Psoas muscle (tissue), 8 donors: ENCODE measurements at regions of chr10 and their contacts with region 1.

Region 1: GRCh38 chr10:73131301-73131700 is 21.0 kb downstream of the NUDT13 start:
- DNase-seq: no peak
- ATAC-seq: peak in 1 of 4 donors; percentile 35
- H3K4me3 ChIP-seq: no peak overlapping the region
- H3K27ac ChIP-seq: no peak overlapping the region
- H3K4me1 ChIP-seq: no peaks in the 10 kb centered on the region
- H3K27me3 ChIP-seq: no peaks in the 10 kb centered on the region
- CTCF ChIP-seq: no peak

Region 2: GRCh38 chr10:73167783-73168464 is 36.6 kb after region 1 on chr10 and contains the starts of genes ECD and FAM149B1:
- intact Hi-C with region 1: no loop called
- DNase-seq: peak; percentile 95 to 97
- ATAC-seq: peak; percentile 98 to 99 (median 98)
- H3K4me3 ChIP-seq: peak within 1 kb of the TSS; percentile 98
- H3K27ac ChIP-seq: peak within 1 kb of the TSS; percentile 99
- H3K4me1 ChIP-seq: peaks cover 33% of the 10 kb centered on the region
- H3K27me3 ChIP-seq: no peaks in the 10 kb centered on the region
- CTCF ChIP-seq: peak; percentile 14
- total RNA-seq, gene ECD: 12.2 to 17.1 (median 15.0) TPM
- total RNA-seq, gene FAM149B1: 8.9 to 18.1 (median 11.8) TPM

Region 3: DNA sequence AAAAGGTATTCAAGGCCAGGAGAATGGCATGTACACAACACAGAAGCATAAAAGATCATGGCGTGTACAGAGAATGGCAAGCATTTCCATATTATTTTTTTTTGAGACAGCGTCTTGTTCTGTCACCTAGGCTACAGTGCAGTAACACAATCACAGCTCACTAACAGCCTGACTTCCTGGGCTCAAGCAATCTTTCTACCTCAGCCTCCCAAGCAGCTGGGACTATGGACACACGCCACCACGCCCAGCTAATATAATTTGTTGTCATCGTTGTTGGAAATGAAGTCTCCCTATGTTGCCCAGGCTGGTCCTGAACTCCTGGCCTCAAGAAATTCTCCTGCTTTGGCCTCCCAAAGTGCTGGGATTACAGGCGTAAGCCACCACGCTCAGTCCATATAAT is 255.3 kb after region 1 on chr10:
- intact Hi-C with region 1: loop called in 1 of 2 experiments (anchors 10 kb)
- DNase-seq: no peak
- ATAC-seq: no peak
- H3K4me3 ChIP-seq: no peak overlapping the region
- H3K27ac ChIP-seq: no peak overlapping the region
- H3K4me1 ChIP-seq: no peaks in the 10 kb centered on the region
- H3K27me3 ChIP-seq: no peaks in the 10 kb centered on the region
- CTCF ChIP-seq: no peak